ENCODE measurements at regions of chr2 and their contacts with region 1.

Region 1: GRCh38 chr2:43219383-43220228 is 6.8 kb downstream of the ZFP36L2 start:
- DNase-seq: peak; percentile 90
- ATAC-seq: peak; percentile 59
- H3K4me3 Mint-ChIP-seq: peak overlapping the region; percentile 80
- H3K27ac Mint-ChIP-seq: peak overlapping the region; percentile 95
- H3K4me1 Mint-ChIP-seq: peaks cover 44% of the 10 kb centered on the region
- H3K27me3 Mint-ChIP-seq: no peaks in the 10 kb centered on the region
- CTCF ChIP-seq: no peak

Region 2: GRCh38 chr2:43059183-43059897 is 160.3 kb before region 1 on chr2:
- CTCF ChIA-PET with region 1: no interaction called
- POLR2A ChIA-PET with region 1: no interaction called
- intact Hi-C with region 1: loop called (anchors 2 kb)
- DNase-seq: peak; percentile 89
- ATAC-seq: peak; percentile 95
- H3K4me3 Mint-ChIP-seq: no peak overlapping the region
- H3K27ac Mint-ChIP-seq: peak overlapping the region; percentile 79
- H3K4me1 Mint-ChIP-seq: peaks cover 30% of the 10 kb centered on the region
- H3K27me3 Mint-ChIP-seq: no peaks in the 10 kb centered on the region
- CTCF ChIP-seq: no peak

Region 3: GRCh38 chr2:43139996-43140621 is 79.5 kb before region 1 on chr2:
- CTCF ChIA-PET with region 1: interaction called, 647 read pairs
- POLR2A ChIA-PET with region 1: interaction called, 549 read pairs
- intact Hi-C with region 1: loop called (anchors 1 kb)
- DNase-seq: peak; percentile 77
- ATAC-seq: peak; percentile 37
- H3K4me3 Mint-ChIP-seq: peak overlapping the region; percentile 55
- H3K27ac Mint-ChIP-seq: peak overlapping the region; percentile 87
- H3K4me1 Mint-ChIP-seq: peaks cover 74% of the 10 kb centered on the region
- H3K27me3 Mint-ChIP-seq: no peaks in the 10 kb centered on the region
- CTCF ChIP-seq: no peak

Region 4: GRCh38 chr2:43149482-43150107 is 70.0 kb before region 1 on chr2:
- CTCF ChIA-PET with region 1: interaction called, 647 read pairs
- POLR2A ChIA-PET with region 1: interaction called, 23 read pairs
- intact Hi-C with region 1: no loop called
- DNase-seq: peak; percentile 88
- ATAC-seq: peak; percentile 94
- H3K4me3 Mint-ChIP-seq: peak overlapping the region; percentile 50
- H3K27ac Mint-ChIP-seq: peak overlapping the region; percentile 89
- H3K4me1 Mint-ChIP-seq: peaks cover 66% of the 10 kb centered on the region
- H3K27me3 Mint-ChIP-seq: no peaks in the 10 kb centered on the region
- CTCF ChIP-seq: no peak

Region 5: DNA sequence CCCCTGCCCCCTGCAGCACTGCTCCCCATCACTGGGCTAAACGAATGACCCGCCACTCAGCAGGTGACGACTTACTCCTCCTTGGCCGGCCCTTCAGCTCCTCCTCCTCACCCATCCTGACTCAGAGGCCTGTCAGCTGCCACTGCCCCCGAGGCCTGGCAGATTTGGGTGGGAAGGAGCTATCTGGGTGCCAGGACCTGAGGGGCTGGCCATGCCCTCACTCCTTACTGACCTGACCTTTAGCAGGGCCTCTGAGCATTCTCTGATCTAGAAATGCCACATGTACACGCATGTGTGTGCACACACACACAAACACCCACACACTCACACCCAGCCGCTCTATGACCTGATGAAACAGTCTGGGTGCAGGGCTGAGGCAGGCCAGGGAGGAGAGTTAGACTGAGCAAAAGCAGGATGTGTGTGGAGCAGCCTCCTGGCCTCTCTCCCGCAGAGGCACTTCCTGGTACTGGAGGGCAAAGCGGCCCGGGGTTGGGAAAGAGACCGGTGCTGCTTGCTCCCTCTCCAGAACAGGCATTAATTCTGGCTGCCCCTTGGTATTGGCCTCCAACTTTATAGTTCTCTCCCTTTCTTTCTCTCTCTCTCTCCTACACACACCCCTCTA is 61.2 kb before region 1 on chr2:
- CTCF ChIA-PET with region 1: interaction called, 6 read pairs
- POLR2A ChIA-PET with region 1: interaction called, 11 read pairs
- intact Hi-C with region 1: no loop called
- DNase-seq: peak; percentile 91
- ATAC-seq: peak; percentile 66
- H3K4me3 Mint-ChIP-seq: peak overlapping the region; percentile 70
- H3K27ac Mint-ChIP-seq: peak overlapping the region; percentile 98
- H3K4me1 Mint-ChIP-seq: peaks cover 78% of the 10 kb centered on the region
- H3K27me3 Mint-ChIP-seq: no peaks in the 10 kb centered on the region
- CTCF ChIP-seq: no peak

Region 6: DNA sequence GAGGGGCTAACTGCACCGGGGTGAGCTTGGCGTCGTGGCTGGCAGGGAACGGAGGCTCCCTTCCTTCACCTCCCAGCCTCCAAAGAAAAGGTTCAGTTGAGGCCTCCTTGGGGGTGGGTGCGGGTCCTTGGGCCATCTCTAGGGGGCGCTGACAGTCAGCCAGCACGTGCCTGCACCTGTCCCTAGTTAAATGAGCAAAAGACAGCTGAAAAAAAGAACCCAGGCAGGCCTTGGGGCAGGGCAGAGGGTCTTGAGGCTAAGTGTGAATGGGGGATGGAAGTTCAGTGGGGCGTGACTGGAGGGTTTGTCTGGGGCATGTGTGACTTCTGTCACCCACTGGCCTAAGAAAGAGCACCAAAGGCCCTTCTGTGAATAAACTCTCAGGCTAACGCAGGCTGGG is 49.6 kb before region 1 on chr2:
- CTCF ChIA-PET with region 1: interaction called, 90 read pairs
- POLR2A ChIA-PET with region 1: interaction called, 252 read pairs
- intact Hi-C with region 1: loop called (anchors 5 kb)
- DNase-seq: peak; percentile 74
- ATAC-seq: no peak
- H3K4me3 Mint-ChIP-seq: peak overlapping the region; percentile 54
- H3K27ac Mint-ChIP-seq: peak overlapping the region; percentile 94
- H3K4me1 Mint-ChIP-seq: peaks cover 73% of the 10 kb centered on the region
- H3K27me3 Mint-ChIP-seq: no peaks in the 10 kb centered on the region
- CTCF ChIP-seq: peak; percentile 88

Region 7: GRCh38 chr2:43194121-43194869 is 25.3 kb before region 1 on chr2:
- CTCF ChIA-PET with region 1: interaction called, 10 read pairs
- POLR2A ChIA-PET with region 1: interaction called, 18 read pairs
- intact Hi-C with region 1: loop called (anchors 1 kb)
- DNase-seq: no peak
- ATAC-seq: no peak
- H3K4me3 Mint-ChIP-seq: peak overlapping the region; percentile 67
- H3K27ac Mint-ChIP-seq: peak overlapping the region; percentile 87
- H3K4me1 Mint-ChIP-seq: peaks cover 56% of the 10 kb centered on the region
- H3K27me3 Mint-ChIP-seq: no peaks in the 10 kb centered on the region
- CTCF ChIP-seq: no peak

Region 8: GRCh38 chr2:43240762-43241150 is 21.1 kb after region 1 on chr2:
- CTCF ChIA-PET with region 1: no interaction called
- POLR2A ChIA-PET with region 1: no interaction called
- intact Hi-C with region 1: no loop called
- DNase-seq: no peak
- ATAC-seq: no peak
- H3K4me3 Mint-ChIP-seq: no peak overlapping the region
- H3K27ac Mint-ChIP-seq: no peak overlapping the region
- H3K4me1 Mint-ChIP-seq: peaks cover 10% of the 10 kb centered on the region
- H3K27me3 Mint-ChIP-seq: no peaks in the 10 kb centered on the region
- CTCF ChIP-seq: no peak

Measured in activated CD8-positive, alpha-beta T cell treated with anti-CD3 and anti-CD28 coated beads for 36 hours (primary cell).